H1 (cell line): ENCODE measurements at regions of chr17 and their contacts with region 1.

Region 1: GRCh38 chr17:77957857-77958715 is at the start of gene TNRC6C:
- DNase-seq: peak; percentile 95 to 99
- H3K4me3 ChIP-seq: peak within 1 kb of the TSS; percentile 66 to 93 (median 82)
- H3K27ac ChIP-seq: 0 out of 2 replicates have a peak within 1 kb of the TSS, but pooled peaks have one; percentile 2
- H3K4me1 ChIP-seq: peaks cover 1 to 5% (median 4%) of the 10 kb centered on the region in 4 experiments; a peak in 4 of 7 replicates
- H3K27me3 ChIP-seq: peaks cover 6 to 30% (median 20%) of the 10 kb centered on the region in 4 experiments
- CTCF ChIP-seq: peak in 2 of 3 experiments; percentile 5 to 8; a peak in 2 of 4 replicates
- EP300 ChIP-seq: no peak
- POLR2A ChIP-seq: peak; percentile 99 to 100
- RAD21 ChIP-seq: peak in 1 of 2 experiments; percentile 2; a peak in 2 of 4 replicates
- total RNA-seq, gene TNRC6C: 28.9 and 30.5 TPM in 2 replicates

Region 2: GRCh38 chr17:77778636-77779489 is 179.2 kb before region 1 on chr17:
- CTCF ChIA-PET with region 1: no interaction called
- POLR2A ChIA-PET with region 1: no interaction called
- DNase-seq: no peak
- H3K4me3 ChIP-seq: no peak overlapping the region
- H3K27ac ChIP-seq: no peak overlapping the region
- H3K4me1 ChIP-seq: peaks cover 0 to 14% (median 7%) of the 10 kb centered on the region in 4 experiments; a peak in 5 of 7 replicates
- H3K27me3 ChIP-seq: peaks cover 20 to 46% (median 33%) of the 10 kb centered on the region in 4 experiments
- CTCF ChIP-seq: no peak
- EP300 ChIP-seq: no peak
- POLR2A ChIP-seq: no peak
- RAD21 ChIP-seq: no peak

Region 3: GRCh38 chr17:77887464-77888241 is 70.4 kb before region 1 on chr17:
- CTCF ChIA-PET with region 1: interaction called, 5 read pairs
- POLR2A ChIA-PET with region 1: interaction called, 14 read pairs
- DNase-seq: no peak
- H3K4me3 ChIP-seq: peak overlapping the region; percentile 42 to 63 (median 55); a peak in 7 of 8 replicates
- H3K27ac ChIP-seq: no peak overlapping the region
- H3K4me1 ChIP-seq: peaks cover 0 to 18% (median 12%) of the 10 kb centered on the region in 4 experiments; a peak in 6 of 7 replicates
- H3K27me3 ChIP-seq: peaks cover 7 to 30% (median 22%) of the 10 kb centered on the region in 4 experiments; a peak in 6 of 7 replicates
- CTCF ChIP-seq: no peak
- EP300 ChIP-seq: no peak
- POLR2A ChIP-seq: no peak
- RAD21 ChIP-seq: no peak

Region 4: DNA sequence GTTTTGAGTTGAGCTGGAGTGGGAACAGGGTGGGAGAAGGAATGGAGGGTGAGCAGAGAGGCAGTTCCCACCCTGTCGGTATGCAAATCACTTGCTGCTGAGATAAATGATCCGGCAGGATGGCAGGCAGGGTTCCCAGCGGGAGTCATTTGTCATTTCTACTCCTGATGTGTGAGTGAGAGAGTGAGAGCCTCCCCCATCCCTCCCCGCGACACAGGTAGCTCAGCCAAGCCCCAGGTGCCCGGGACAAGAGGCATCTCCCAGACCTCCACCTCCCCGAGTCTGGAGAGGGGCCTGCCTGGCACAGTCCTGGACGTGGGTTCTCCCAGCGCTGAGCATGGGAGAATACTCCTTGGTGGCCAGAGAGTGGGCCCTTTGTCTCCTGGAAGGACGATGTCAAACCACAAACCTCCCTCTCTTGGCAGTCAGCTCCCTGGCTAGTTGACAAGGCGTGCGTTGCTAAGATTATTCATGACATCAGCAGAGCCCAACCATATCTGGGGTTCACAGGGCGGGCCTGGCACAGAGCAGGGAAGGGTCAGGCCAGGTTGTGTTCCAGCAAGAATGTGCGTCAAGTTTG is 33.2 kb before region 1 on chr17:
- CTCF ChIA-PET with region 1: interaction called, 5 read pairs
- POLR2A ChIA-PET with region 1: interaction called, 30 read pairs
- DNase-seq: peak; percentile 62 to 80
- H3K4me3 ChIP-seq: peak overlapping the region in 3 of 4 experiments; percentile 7 to 24 (median 20); a peak in 2 of 8 replicates
- H3K27ac ChIP-seq: no peak overlapping the region
- H3K4me1 ChIP-seq: peaks cover 12 to 38% (median 29%) of the 10 kb centered on the region in 4 experiments
- H3K27me3 ChIP-seq: no peaks in the 10 kb centered on the region; a peak in 1 of 7 replicates
- CTCF ChIP-seq: no peak
- EP300 ChIP-seq: no peak; a peak in 1 of 3 replicates
- POLR2A ChIP-seq: no peak
- RAD21 ChIP-seq: no peak

Region 5: DNA sequence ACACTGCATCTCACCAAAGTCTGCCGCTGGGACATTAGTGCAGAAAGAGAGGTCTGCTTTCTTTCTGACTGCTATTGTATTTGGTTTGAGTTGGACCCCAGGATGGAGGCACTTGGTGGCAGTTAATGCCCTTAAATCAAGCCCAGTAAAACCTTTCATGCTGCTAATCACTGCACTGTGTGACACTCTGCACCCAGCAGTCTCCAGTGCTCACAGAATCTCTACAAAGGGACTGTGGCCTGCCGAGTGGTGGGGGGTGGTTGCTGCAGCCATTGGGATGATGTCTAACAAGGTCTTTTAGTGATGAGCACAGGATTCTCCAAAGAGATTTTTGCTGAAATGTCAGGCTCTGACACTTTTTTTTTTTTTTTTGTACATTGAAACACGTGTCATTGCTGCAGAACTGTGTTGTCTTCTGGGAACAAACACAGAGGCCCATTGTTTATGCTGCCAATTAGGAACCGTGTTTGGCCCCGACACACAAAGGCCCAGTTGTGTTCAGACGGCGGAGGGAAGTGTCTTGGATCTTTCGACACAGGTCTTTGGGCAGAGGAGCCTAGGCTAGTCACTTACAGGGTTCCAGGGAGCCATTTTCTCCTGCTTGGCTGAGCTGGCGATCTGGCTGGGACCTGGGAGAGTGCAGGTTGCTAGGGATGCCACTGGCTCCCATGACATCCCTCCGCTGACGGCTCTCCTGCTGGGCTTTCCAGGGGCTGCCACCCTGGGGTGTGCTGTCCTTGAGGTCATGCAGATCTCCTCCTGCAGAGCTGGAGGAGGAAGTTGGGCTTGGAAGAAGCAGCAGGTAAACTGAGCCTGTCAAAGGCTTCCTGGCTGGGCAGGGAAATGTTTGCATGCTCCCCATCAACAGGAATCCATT is 15.7 kb before region 1 on chr17:
- CTCF ChIA-PET with region 1: interaction called, 6 read pairs
- POLR2A ChIA-PET with region 1: interaction called, 100 read pairs
- DNase-seq: no peak
- H3K4me3 ChIP-seq: no peak overlapping the region
- H3K27ac ChIP-seq: no peak overlapping the region
- H3K4me1 ChIP-seq: peaks cover 0 to 2% (median 0%) of the 10 kb centered on the region in 4 experiments; a peak in 1 of 7 replicates
- H3K27me3 ChIP-seq: 0 out of 7 replicates have a peak, but pooled peaks cover 0 to 2% (median 0%) of the 10 kb centered on the region in 4 experiments
- CTCF ChIP-seq: no peak
- EP300 ChIP-seq: no peak
- POLR2A ChIP-seq: no peak
- RAD21 ChIP-seq: no peak

Region 6: GRCh38 chr17:77974396-77974795 is 16.3 kb after region 1 on chr17:
- CTCF ChIA-PET with region 1: interaction called, 5 read pairs
- POLR2A ChIA-PET with region 1: interaction called, 17 read pairs
- DNase-seq: no peak
- H3K4me3 ChIP-seq: no peak overlapping the region
- H3K27ac ChIP-seq: no peak overlapping the region
- H3K4me1 ChIP-seq: peaks cover 0 to 9% (median 4%) of the 10 kb centered on the region in 4 experiments; a peak in 2 of 7 replicates
- H3K27me3 ChIP-seq: no peaks in the 10 kb centered on the region
- CTCF ChIP-seq: no peak
- EP300 ChIP-seq: no peak
- POLR2A ChIP-seq: no peak
- RAD21 ChIP-seq: no peak

Region 7: GRCh38 chr17:78075545-78075944 is 117.5 kb after region 1 on chr17:
- CTCF ChIA-PET with region 1: no interaction called
- POLR2A ChIA-PET with region 1: no interaction called
- DNase-seq: no peak
- H3K4me3 ChIP-seq: no peak overlapping the region
- H3K27ac ChIP-seq: no peak overlapping the region
- H3K4me1 ChIP-seq: no peaks in the 10 kb centered on the region
- H3K27me3 ChIP-seq: no peaks in the 10 kb centered on the region
- CTCF ChIP-seq: no peak
- EP300 ChIP-seq: no peak
- POLR2A ChIP-seq: no peak
- RAD21 ChIP-seq: no peak

Region 8: GRCh38 chr17:78140169-78140976 is 182.3 kb after region 1 on chr17:
- CTCF ChIA-PET with region 1: no interaction called
- POLR2A ChIA-PET with region 1: no interaction called
- DNase-seq: peak; percentile 98 to 100
- H3K4me3 ChIP-seq: peak overlapping the region in 3 of 4 experiments; percentile 18 to 45 (median 24); a peak in 5 of 8 replicates
- H3K27ac ChIP-seq: no peak overlapping the region
- H3K4me1 ChIP-seq: peaks cover 0 to 6% (median 5%) of the 10 kb centered on the region in 4 experiments; a peak in 3 of 7 replicates
- H3K27me3 ChIP-seq: 0 out of 7 replicates have a peak, but pooled peaks cover 0 to 2% (median 0%) of the 10 kb centered on the region in 4 experiments
- CTCF ChIP-seq: no peak
- EP300 ChIP-seq: no peak
- POLR2A ChIP-seq: peak in 1 of 2 experiments; percentile 60; a peak in 2 of 3 replicates
- RAD21 ChIP-seq: no peak